A673 (cell line): ENCODE measurements at regions of chr10 and their contacts with region 1.

Region 1: DNA sequence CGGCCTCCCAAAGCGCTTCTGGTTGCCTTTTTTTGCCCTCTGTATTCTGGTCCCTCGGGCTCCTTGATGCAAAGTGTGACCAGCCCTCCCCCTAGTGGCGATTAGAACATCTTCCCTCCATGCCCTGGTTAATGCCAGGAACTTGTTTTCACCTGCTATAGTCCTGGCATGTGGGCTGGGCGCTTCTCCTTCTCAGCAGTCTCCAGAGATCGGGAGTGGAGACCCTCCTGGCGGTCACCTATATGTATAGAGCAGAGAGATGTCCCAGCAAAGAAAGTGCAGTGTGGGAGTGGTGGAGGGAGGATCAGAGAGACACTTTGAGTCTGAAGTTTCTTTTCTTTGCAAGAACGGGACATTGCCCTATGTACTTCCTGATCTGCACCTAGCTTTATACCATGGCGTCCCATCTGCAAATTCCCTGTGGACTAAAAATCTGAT is 264.1 kb downstream of the OTUD1 start:
- DNase-seq: peak; percentile 90
- H3K4me3 ChIP-seq: peak overlapping the region; percentile 37
- H3K27ac ChIP-seq: no peak overlapping the region
- H3K4me1 ChIP-seq: peaks cover 8% of the 10 kb centered on the region
- H3K27me3 ChIP-seq: no peaks in the 10 kb centered on the region
- CTCF ChIP-seq: peak; percentile 90

Region 2: DNA sequence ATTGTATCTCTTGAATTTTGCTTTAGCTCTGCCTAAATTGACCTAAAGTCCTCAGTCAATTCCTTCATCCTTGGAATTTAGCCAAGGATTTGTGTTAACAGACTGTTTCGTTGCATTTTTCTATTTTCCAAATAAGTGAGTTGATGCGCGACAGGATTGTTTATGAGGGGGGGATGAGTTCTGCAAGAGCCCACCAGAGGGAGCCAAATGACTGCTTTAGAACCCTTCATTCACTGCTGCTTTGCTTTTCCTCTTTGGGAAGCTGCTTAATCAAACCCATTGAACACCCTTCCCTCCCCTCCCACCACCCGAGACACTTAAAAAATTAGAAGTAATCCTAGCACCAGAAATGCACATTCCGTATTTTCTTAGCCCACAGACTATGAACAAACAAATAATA is 544.6 kb before region 1 on chr10:
- CTCF ChIA-PET with region 1: no interaction called
- POLR2A ChIA-PET with region 1: no interaction called
- intact Hi-C with region 1: loop called (anchors 2 kb)
- DNase-seq: peak; percentile 80
- H3K4me3 ChIP-seq: peak overlapping the region; percentile 23
- H3K27ac ChIP-seq: no peak overlapping the region
- H3K4me1 ChIP-seq: peaks cover 9% of the 10 kb centered on the region
- H3K27me3 ChIP-seq: no peaks in the 10 kb centered on the region
- CTCF ChIP-seq: peak; percentile 75

Region 3: DNA sequence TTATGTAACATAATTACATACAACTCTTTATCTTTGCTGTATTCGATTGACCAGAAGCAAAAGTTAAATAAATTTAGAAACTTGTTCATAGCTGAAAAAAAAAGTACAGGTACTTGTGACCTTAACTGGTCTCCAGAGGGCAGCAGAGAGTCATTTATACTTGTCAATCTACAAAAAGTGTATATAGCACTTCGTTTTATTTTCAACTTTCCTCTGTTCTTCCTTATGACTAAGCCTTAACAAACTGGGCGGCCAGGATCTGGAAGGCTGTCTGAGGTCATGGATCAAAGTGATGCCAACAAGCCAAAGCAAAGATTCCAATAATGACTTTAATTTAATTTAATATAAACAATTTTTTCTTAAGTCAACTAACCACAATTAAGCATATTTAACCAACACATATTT is 388.2 kb before region 1 on chr10:
- CTCF ChIA-PET with region 1: no interaction called
- POLR2A ChIA-PET with region 1: no interaction called
- intact Hi-C with region 1: loop called (anchors 5 kb)
- DNase-seq: peak; percentile 86
- H3K4me3 ChIP-seq: no peak overlapping the region
- H3K27ac ChIP-seq: no peak overlapping the region
- H3K4me1 ChIP-seq: peaks cover 5% of the 10 kb centered on the region
- H3K27me3 ChIP-seq: no peaks in the 10 kb centered on the region
- CTCF ChIP-seq: peak; percentile 77

Region 4: GRCh38 chr10:24201503-24202180 is 498.6 kb after region 1 on chr10:
- CTCF ChIA-PET with region 1: no interaction called
- POLR2A ChIA-PET with region 1: no interaction called
- intact Hi-C with region 1: loop called (anchors 10 kb)
- DNase-seq: no peak
- H3K4me3 ChIP-seq: no peak overlapping the region
- H3K27ac ChIP-seq: no peak overlapping the region
- H3K4me1 ChIP-seq: peaks cover 27% of the 10 kb centered on the region
- H3K27me3 ChIP-seq: no peaks in the 10 kb centered on the region
- CTCF ChIP-seq: no peak

Region 5: DNA sequence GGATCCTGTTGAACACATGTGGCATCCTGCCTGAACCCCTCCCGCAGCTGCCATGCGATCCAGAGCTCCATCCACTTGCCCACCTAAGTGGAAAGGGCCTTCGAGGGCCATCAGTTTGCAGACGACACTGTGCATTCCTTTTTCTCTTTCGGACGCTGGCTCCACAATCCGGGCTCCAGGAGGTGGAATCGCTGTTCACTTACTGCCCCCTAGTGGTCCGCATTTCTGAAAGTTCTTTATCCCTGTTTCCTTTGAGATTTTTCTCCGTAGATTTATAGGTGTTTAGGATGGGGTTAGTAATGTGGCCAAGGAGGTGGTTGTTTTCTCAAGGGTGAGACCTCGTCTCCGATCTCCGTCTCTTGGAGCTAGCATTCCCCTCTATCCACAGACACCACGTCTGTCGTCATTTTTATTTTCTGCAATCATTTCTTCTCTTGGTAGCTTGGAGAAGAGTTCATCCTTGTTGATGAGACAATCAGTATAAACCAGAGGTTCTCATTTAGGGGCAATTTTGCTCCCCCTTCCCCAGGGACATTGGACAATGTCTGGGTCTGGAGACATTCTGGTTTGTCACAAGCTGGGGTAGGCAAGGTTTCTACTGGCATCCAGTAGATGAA is 816.1 kb after region 1 on chr10:
- CTCF ChIA-PET with region 1: no interaction called
- POLR2A ChIA-PET with region 1: no interaction called
- intact Hi-C with region 1: loop called (anchors 5 kb)
- DNase-seq: peak; percentile 88
- H3K4me3 ChIP-seq: no peak overlapping the region
- H3K27ac ChIP-seq: peak overlapping the region; percentile 71
- H3K4me1 ChIP-seq: peaks cover 41% of the 10 kb centered on the region
- H3K27me3 ChIP-seq: no peaks in the 10 kb centered on the region
- CTCF ChIP-seq: peak; percentile 90